ENCODE measurements at regions of chr9 and their contacts with region 1.

Region 1: GRCh38 chr9:137578518-137579258 is at the start of gene DPH7:
- DNase-seq: peak; percentile 96
- H3K4me3 Mint-ChIP-seq: peak within 1 kb of the TSS; percentile 81
- H3K27ac Mint-ChIP-seq: no peak within 1 kb of the TSS
- H3K4me1 Mint-ChIP-seq: peaks cover 37% of the 10 kb centered on the region
- H3K27me3 Mint-ChIP-seq: no peaks in the 10 kb centered on the region
- total RNA-seq, gene DPH7: 32.4 to 36.6 TPM

Region 2: DNA sequence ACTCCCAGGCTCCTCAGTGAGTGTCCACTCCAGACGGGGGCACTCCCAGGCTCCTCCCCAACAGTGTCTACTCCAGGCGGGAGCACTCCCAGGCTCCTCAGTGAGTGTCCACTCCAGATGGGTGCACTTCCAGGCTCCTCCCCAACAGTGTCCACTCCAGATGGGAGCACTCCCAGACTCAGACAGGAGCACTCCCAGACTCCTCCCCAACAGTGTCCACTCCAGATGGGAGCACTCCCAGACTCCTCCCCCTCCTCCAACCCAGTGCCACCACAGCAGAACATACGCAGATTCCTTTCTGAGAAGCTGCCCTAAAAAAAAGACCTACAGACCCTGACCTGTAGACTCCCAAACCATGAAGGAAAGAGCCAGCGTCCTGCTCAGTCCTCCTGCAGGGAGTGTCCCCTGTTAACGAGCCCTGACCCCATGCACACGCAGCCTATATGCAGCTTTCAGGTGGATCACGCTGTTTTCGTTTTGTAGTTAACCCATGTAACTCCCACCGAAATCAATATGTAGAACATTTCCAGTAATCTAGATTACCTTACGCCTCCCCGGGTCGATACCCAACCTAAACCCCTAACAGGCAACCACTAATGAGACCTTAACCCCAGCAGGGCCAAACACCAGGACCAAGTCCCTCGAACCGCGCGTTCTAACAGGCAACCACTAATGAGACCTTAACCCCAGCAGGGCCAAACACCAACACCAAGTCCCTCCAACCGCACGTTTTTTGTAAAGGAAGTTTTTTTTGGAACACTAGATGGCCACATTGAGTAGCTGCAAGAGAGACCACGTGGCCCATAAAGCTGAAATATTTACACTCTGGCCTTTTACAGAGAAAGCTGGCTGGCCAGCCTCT is 44.2 kb before region 1 on chr9:
- CTCF ChIA-PET with region 1: interaction called, 6 read pairs
- intact Hi-C with region 1: loop called (anchors 2 kb)
- DNase-seq: peak; percentile 29
- H3K4me3 Mint-ChIP-seq: no peak overlapping the region
- H3K27ac Mint-ChIP-seq: no peak overlapping the region
- H3K4me1 Mint-ChIP-seq: peaks cover 25% of the 10 kb centered on the region
- H3K27me3 Mint-ChIP-seq: no peaks in the 10 kb centered on the region

Region 3: DNA sequence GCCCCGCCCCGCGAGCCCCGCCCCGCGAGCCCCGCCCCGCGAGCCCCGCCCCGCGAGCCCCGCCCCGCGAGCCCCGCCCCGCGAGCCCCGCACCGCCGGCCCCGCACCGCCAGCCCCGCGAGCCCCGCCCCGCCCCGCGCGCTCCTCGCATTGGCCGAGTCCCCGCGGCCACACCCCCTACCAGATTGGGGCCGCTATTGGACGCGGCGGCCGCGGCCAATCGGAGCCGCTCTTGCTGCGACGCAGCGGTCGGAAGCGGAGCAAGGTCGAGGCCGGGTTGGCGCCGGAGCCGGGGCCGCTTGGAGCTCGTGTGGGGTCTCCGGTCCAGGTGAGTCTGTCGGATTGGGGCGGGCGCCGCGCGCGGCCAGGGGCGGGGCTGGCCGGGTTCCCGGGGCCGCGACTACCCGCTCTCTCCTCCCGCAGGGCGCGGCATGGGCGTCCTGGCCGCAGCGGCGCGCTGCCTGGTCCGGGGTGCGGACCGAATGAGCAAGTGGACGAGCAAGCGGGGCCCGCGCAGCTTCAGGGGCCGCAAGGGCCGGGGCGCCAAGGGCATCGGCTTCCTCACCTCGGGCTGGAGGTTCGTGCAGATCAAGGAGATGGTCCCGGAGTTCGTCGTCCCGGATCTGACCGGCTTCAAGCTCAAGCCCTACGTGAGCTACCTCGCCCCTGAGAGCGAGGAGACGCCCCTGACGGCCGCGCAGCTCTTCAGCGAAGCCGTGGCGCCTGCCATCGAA is 26.9 kb before region 1 on chr9 and contains the start of gene MRPL41:
- CTCF ChIA-PET with region 1: interaction called, 3 read pairs
- intact Hi-C with region 1: loop called (anchors 2 kb)
- DNase-seq: peak; percentile 86
- H3K4me3 Mint-ChIP-seq: peak within 1 kb of the TSS; percentile 79
- H3K27ac Mint-ChIP-seq: peak within 1 kb of the TSS; percentile 51
- H3K4me1 Mint-ChIP-seq: peaks cover 20% of the 10 kb centered on the region
- H3K27me3 Mint-ChIP-seq: no peaks in the 10 kb centered on the region
- total RNA-seq, gene MRPL41: 39.3 to 41.0 TPM

Region 4: GRCh38 chr9:137590462-137591383 is 12.0 kb after region 1 on chr9 and contains the start of gene ZMYND19:
- CTCF ChIA-PET with region 1: interaction called, 14 read pairs
- intact Hi-C with region 1: loop called (anchors 1 kb)
- DNase-seq: peak; percentile 88
- H3K4me3 Mint-ChIP-seq: peak within 1 kb of the TSS; percentile 97
- H3K27ac Mint-ChIP-seq: peak within 1 kb of the TSS; percentile 89
- H3K4me1 Mint-ChIP-seq: peaks cover 21% of the 10 kb centered on the region
- H3K27me3 Mint-ChIP-seq: no peaks in the 10 kb centered on the region
- total RNA-seq, gene ZMYND19: 50.9 to 52.5 TPM

Region 5: GRCh38 chr9:137605121-137606004 is 26.7 kb after region 1 on chr9 and contains the start of gene ARRDC1:
- CTCF ChIA-PET with region 1: no interaction called
- intact Hi-C with region 1: loop called (anchors 1 kb)
- DNase-seq: peak; percentile 93
- H3K4me3 Mint-ChIP-seq: peak within 1 kb of the TSS; percentile 75
- H3K27ac Mint-ChIP-seq: no peak within 1 kb of the TSS
- H3K4me1 Mint-ChIP-seq: peaks cover 13% of the 10 kb centered on the region
- H3K27me3 Mint-ChIP-seq: no peaks in the 10 kb centered on the region
- total RNA-seq, gene ARRDC1: 19.1 to 21.4 TPM

Region 6: DNA sequence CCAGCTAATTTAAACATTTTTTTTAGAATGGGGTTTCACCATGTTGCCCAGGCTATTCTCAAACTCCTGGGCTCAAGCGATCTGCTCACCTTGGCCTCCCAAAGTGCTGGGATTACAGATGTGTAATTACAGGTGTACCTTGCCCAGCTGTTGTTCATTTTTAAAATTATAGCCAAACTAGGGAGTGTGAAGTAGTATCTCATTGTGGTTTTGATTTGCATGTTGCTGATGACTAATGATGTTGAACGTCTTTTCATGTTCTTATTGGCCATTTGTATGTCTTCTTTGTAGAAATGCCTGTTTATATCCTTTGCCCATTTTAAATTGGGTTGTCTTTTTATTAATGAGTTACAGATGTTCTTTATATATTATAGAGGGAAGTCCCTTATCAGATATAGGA is 71.6 kb after region 1 on chr9:
- CTCF ChIA-PET with region 1: no interaction called
- intact Hi-C with region 1: no loop called
- DNase-seq: no peak
- H3K4me3 Mint-ChIP-seq: no peak overlapping the region
- H3K27ac Mint-ChIP-seq: no peak overlapping the region
- H3K4me1 Mint-ChIP-seq: peaks cover 44% of the 10 kb centered on the region
- H3K27me3 Mint-ChIP-seq: no peaks in the 10 kb centered on the region

Region 7: GRCh38 chr9:137785704-137786161 is 207.0 kb after region 1 on chr9:
- CTCF ChIA-PET with region 1: no interaction called
- intact Hi-C with region 1: no loop called
- DNase-seq: no peak
- H3K4me3 Mint-ChIP-seq: no peak overlapping the region
- H3K27ac Mint-ChIP-seq: no peak overlapping the region
- H3K4me1 Mint-ChIP-seq: peaks cover 2% of the 10 kb centered on the region
- H3K27me3 Mint-ChIP-seq: no peaks in the 10 kb centered on the region

Measured in activated naive CD4-positive, alpha-beta T cell treated with anti-CD3 and anti-CD28 coated beads for 36 hours (primary cell).